CD8-positive, alpha-beta memory T cell (primary cell): ENCODE measurements at regions of chr12 and their contacts with region 1.

Region 1: GRCh38 chr12:49740930-49741881 is at the start of gene TMBIM6:
- DNase-seq: peak; percentile 97 to 100 (median 99)
- H3K4me3 ChIP-seq: peak within 1 kb of the TSS; percentile 88
- H3K4me3 Mint-ChIP-seq: peak within 1 kb of the TSS; percentile 91 to 100 (median 94)
- H3K27ac ChIP-seq: peak within 1 kb of the TSS; percentile 99
- H3K27ac Mint-ChIP-seq: peak within 1 kb of the TSS; percentile 94 to 100 (median 99)
- H3K4me1 ChIP-seq: peaks cover 43% of the 10 kb centered on the region
- H3K4me1 Mint-ChIP-seq: peaks cover 44 to 51% (median 48%) of the 10 kb centered on the region in 3 donors
- H3K27me3 ChIP-seq: no peaks in the 10 kb centered on the region
- H3K27me3 Mint-ChIP-seq: peaks cover 0 to 4% of the 10 kb centered on the region in 2 donors
- total RNA-seq, gene TMBIM6: 443 to 449 TPM

Region 2: GRCh38 chr12:49636979-49637755 is 104.0 kb before region 1 on chr12:
- CTCF ChIA-PET with region 1: interaction called, 15 read pairs
- POLR2A ChIA-PET with region 1: interaction called, 4 read pairs
- DNase-seq: peak; percentile 28 to 74 (median 35)
- H3K4me3 ChIP-seq: no peak overlapping the region
- H3K4me3 Mint-ChIP-seq: no peak overlapping the region
- H3K27ac ChIP-seq: no peak overlapping the region
- H3K27ac Mint-ChIP-seq: peak overlapping the region in 5 of 8 donors; percentile 0 to 81 (median 51)
- H3K4me1 ChIP-seq: peaks cover 13% of the 10 kb centered on the region
- H3K4me1 Mint-ChIP-seq: peaks cover 15 to 19% (median 18%) of the 10 kb centered on the region in 3 donors
- H3K27me3 ChIP-seq: no peaks in the 10 kb centered on the region
- H3K27me3 Mint-ChIP-seq: no peaks in the 10 kb centered on the region

Region 3: DNA sequence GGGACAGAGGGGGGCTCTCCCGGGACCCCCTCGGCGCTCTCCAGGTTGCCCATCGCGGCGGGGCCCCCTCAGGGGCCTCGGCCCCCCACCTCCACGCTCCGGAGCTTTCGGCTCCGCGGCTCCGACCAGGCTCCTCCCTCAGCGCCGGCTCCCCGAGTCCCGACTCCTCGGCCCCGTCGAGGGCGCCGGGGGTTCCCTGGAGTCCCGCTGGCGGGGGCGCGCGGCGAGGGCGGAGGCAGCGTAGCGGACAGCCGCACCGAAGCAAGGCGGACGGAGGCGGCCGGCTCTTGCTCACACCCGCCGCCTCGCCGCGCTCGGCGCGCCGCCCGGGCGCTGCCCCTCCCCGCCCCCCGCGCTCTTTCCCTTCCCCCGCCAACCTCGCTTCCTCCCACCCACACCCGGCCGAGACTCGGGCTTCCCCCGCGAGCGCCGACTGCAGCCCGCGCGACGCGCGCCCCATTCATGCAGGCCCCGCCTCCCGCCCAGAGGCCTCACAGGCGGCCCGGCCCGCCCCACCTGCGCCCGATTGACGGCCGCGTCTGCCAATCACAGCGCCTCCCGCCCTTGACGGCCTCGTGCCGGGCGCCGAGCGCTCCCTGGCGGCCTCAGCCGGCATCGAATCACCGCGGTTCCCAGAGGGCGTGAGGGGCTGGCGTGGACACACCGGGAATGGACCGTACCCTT is 33.9 kb before region 1 on chr12 and contains the start of gene FMNL3:
- CTCF ChIA-PET with region 1: interaction called, 27 read pairs
- POLR2A ChIA-PET with region 1: interaction called, 8 read pairs
- DNase-seq: peak; percentile 97 to 99 (median 99)
- H3K4me3 ChIP-seq: peak within 1 kb of the TSS; percentile 72
- H3K4me3 Mint-ChIP-seq: peak within 1 kb of the TSS; percentile 87 to 96 (median 91)
- H3K27ac ChIP-seq: peak within 1 kb of the TSS; percentile 76
- H3K27ac Mint-ChIP-seq: peak within 1 kb of the TSS; percentile 33 to 95 (median 90)
- H3K4me1 ChIP-seq: peaks cover 39% of the 10 kb centered on the region
- H3K4me1 Mint-ChIP-seq: peaks cover 39 to 45% (median 44%) of the 10 kb centered on the region in 3 donors
- H3K27me3 ChIP-seq: no peaks in the 10 kb centered on the region
- H3K27me3 Mint-ChIP-seq: peaks cover 5 to 6% of the 10 kb centered on the region in 2 donors
- total RNA-seq, gene FMNL3: 35.8 to 36.7 TPM

Region 4: GRCh38 chr12:49776413-49776812 is 35.2 kb after region 1 on chr12:
- CTCF ChIA-PET with region 1: interaction called, 45 read pairs
- POLR2A ChIA-PET with region 1: interaction called, 19 read pairs
- DNase-seq: peak in 4 of 5 donors; percentile 8 to 66 (median 38)
- H3K4me3 ChIP-seq: no peak overlapping the region
- H3K4me3 Mint-ChIP-seq: no peak overlapping the region
- H3K27ac ChIP-seq: no peak overlapping the region
- H3K27ac Mint-ChIP-seq: no peak overlapping the region
- H3K4me1 ChIP-seq: peaks cover 15% of the 10 kb centered on the region
- H3K4me1 Mint-ChIP-seq: peaks cover 12 to 19% (median 13%) of the 10 kb centered on the region in 3 donors
- H3K27me3 ChIP-seq: peaks cover 4% of the 10 kb centered on the region
- H3K27me3 Mint-ChIP-seq: peaks cover 24 to 27% of the 10 kb centered on the region in 2 donors

Region 5: GRCh38 chr12:49828133-49829091 is 87.2 kb after region 1 on chr12 and contains the start of gene NCKAP5L:
- CTCF ChIA-PET with region 1: interaction called, 7 read pairs
- POLR2A ChIA-PET with region 1: interaction called, 10 read pairs
- DNase-seq: peak; percentile 92 to 96 (median 93)
- H3K4me3 ChIP-seq: peak within 1 kb of the TSS; percentile 69
- H3K4me3 Mint-ChIP-seq: peak within 1 kb of the TSS; percentile 92 to 99 (median 97)
- H3K27ac ChIP-seq: peak within 1 kb of the TSS; percentile 66
- H3K27ac Mint-ChIP-seq: peak within 1 kb of the TSS; percentile 81 to 97 (median 92)
- H3K4me1 ChIP-seq: peaks cover 16% of the 10 kb centered on the region
- H3K4me1 Mint-ChIP-seq: peaks cover 29 to 35% (median 35%) of the 10 kb centered on the region in 3 donors
- H3K27me3 ChIP-seq: no peaks in the 10 kb centered on the region
- H3K27me3 Mint-ChIP-seq: peaks cover 0 to 3% of the 10 kb centered on the region in 2 donors
- total RNA-seq, gene NCKAP5L: 4.8 to 5.5 TPM